Activated T-helper 1 cell treated with anti-CD3 and anti-CD28 coated beads, Interleukin-12 subunit alpha, Interleukin-12 subunit beta, Interleukin-2, Interleukin-4 antibody, amounts not matched to agents 30 ng/mL and 10 ng/mL and 1 ng/mL, durations not matched to agents 14 hours and 24 hours and 36 hours (primary cell): ENCODE measurements at regions of chr11 and their contacts with region 1.

Region 1: GRCh38 chr11:74398244-74399159 is at the start of gene PGM2L1:
- DNase-seq: peak; percentile 88
- H3K4me3 Mint-ChIP-seq: peak within 1 kb of the TSS; percentile 96
- H3K27ac Mint-ChIP-seq: peak within 1 kb of the TSS; percentile 99
- H3K4me1 Mint-ChIP-seq: peaks cover 36% of the 10 kb centered on the region
- H3K27me3 Mint-ChIP-seq: peaks cover 2% of the 10 kb centered on the region
- total RNA-seq, gene PGM2L1: 4.0 and 4.5 TPM in 2 replicates

Region 2: DNA sequence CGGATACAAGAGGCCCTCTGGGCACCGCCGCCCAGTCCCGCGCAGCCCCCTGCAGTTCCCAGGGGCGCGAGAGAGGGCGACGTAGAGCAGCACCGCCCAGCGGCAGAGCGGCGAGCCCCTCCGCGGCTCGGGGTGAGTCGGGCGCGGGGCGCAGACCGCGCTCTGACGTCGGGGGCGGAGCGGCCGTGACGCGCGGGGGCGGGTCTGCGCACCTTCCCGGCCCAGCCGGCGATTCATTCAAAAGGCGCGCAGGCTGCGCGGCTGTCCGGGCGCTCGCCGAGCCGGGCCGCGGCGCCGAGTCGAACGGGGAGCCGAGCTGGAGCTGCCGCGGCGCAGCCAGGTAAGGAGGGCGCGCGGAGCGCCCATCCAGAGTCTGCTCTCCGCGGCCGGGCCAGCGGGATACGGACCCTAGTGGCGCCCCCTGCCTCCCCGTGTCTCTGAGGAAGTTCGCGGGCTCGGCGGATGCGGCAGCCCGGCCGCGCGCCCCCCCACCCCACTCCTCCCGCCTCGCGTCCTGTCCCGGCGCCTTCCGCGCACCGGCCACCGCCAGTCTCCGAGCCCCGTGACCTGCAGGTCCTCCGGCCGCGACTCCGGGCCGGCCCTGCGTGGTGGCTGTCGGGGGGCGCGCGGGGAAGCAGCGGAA is 1022.2 kb before region 1 on chr11 and contains the start of gene RELT:
- intact Hi-C with region 1: loop called (anchors 5 kb)
- DNase-seq: peak; percentile 94
- H3K4me3 Mint-ChIP-seq: peak within 1 kb of the TSS; percentile 91
- H3K27ac Mint-ChIP-seq: peak within 1 kb of the TSS; percentile 90
- H3K4me1 Mint-ChIP-seq: peaks cover 28% of the 10 kb centered on the region
- H3K27me3 Mint-ChIP-seq: no peaks in the 10 kb centered on the region
- total RNA-seq, gene RELT: 34.6 and 37.6 TPM in 2 replicates

Region 3: DNA sequence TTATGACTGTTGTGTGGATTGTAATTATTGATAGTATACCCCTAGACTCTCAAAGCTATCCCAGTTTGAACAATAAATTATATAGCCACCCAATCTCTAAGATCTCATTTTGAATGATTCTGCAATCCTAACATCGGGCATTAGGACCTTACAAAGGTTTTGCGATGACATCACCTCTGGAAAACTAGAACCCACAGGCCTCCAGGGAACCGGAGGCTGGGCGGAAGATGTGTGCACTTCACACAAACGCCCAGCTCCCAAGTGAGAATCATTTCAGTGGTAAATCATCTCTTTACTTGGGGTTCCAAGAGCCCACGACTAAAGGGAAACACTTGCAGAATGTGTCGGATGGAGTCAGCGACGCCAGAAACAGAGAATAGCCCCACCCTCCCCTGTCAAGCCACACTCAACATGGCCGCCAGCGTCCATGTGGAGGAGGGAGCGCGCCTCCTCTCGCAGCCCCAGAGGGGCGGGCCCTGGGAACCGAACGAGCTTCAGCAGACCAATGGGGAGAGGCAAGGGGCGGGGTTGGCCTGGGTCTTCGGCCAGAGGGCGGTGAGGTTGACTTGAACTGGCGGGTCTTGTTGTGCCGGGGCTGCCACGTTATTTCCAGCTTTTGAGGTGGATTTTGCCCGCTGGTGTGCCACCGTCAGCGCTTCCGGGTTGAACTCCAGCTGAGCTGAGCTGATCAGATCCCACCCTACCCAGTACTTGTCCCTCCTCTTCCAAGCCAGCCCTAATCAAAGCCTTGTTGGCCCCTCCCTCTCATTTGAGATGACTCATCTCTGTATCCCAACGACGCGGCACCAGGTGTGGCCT is 619.2 kb before region 1 on chr11:
- intact Hi-C with region 1: loop called (anchors 5 kb)
- DNase-seq: peak; percentile 97
- H3K4me3 Mint-ChIP-seq: peak overlapping the region; percentile 90
- H3K27ac Mint-ChIP-seq: peak overlapping the region; percentile 99
- H3K4me1 Mint-ChIP-seq: peaks cover 10% of the 10 kb centered on the region
- H3K27me3 Mint-ChIP-seq: no peaks in the 10 kb centered on the region

Region 4: DNA sequence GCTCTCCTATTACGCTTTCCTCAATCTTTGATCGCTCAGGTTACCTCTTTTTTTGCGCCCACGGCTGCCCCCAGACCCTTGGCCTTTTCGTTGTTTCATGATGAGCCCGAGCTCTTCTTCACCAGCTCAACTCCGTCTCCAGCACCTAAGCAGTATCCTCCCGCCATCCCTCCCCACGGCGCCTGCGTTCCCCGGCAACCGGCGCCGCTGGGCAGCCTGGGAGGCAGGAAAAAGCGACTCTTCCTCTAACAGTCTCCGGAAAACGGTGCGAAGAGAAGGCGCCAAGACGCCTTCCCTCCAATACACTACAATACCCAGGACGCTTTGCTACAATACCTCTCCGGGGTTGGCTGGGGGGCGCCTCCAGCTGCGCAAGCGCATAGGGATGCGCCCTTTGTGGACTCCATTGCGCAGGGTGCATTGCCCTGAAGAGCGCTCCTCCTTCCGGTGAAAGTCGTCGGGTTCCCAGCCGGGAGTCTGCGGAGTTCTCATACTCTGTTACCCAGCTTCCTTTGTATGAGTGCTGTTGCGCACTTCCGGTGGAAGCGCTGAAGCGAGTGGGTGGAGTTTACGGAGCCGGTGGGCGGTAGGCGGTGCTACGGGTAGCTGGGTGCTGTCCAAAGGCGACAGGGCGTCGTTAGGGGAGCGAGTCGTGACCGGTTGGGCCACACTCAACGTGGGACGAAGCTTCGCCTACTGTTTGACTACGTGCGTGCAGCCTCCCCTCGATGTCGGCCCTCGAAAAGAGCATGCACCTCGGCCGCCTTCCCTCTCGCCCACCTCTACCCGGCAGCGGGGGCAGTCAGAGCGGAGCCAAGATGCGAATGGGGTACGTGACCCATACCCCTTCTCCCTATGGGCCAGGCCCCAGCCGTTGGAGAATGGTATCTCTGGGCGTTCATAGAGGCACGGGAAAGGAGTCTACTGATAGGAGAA is 227.5 kb before region 1 on chr11 and contains the starts of genes C2CD3 and PPME1:
- intact Hi-C with region 1: loop called (anchors 1 kb)
- DNase-seq: peak; percentile 99
- H3K4me3 Mint-ChIP-seq: no peak within 1 kb of the TSS
- H3K27ac Mint-ChIP-seq: no peak within 1 kb of the TSS
- H3K4me1 Mint-ChIP-seq: peaks cover 11% of the 10 kb centered on the region
- H3K27me3 Mint-ChIP-seq: no peaks in the 10 kb centered on the region
- total RNA-seq, gene C2CD3: 46.5 and 49.5 TPM in 2 replicates
- total RNA-seq, gene PPME1: 64.8 and 68.1 TPM in 2 replicates

Region 5: DNA sequence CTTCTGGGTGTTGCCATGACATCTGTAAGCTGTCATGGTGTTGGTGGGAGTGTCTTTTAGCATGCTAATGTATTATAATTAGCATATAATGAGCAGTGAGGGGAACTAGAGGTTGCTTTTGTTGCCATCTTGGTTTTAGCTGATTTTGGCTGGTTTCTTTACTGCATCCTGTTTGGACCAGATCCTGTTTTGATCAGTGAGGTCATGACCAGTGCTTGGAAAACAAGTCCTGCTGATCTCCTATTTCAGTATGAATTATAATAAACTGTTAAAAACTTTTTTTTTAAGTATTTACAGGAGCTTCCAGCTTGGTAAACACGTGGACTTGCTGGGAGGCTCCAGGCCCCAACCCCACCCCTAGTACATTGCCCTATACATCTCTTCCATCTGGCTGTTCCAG is 56.6 kb before region 1 on chr11:
- intact Hi-C with region 1: no loop called
- DNase-seq: no peak
- H3K4me3 Mint-ChIP-seq: no peak overlapping the region
- H3K27ac Mint-ChIP-seq: no peak overlapping the region
- H3K4me1 Mint-ChIP-seq: no peaks in the 10 kb centered on the region
- H3K27me3 Mint-ChIP-seq: no peaks in the 10 kb centered on the region

Region 6: GRCh38 chr11:74449369-74449931 is 50.9 kb after region 1 on chr11:
- intact Hi-C with region 1: loop called (anchors 2 kb)
- DNase-seq: peak; percentile 12
- H3K4me3 Mint-ChIP-seq: no peak overlapping the region
- H3K27ac Mint-ChIP-seq: no peak overlapping the region
- H3K4me1 Mint-ChIP-seq: peaks cover 7% of the 10 kb centered on the region
- H3K27me3 Mint-ChIP-seq: peaks cover 12% of the 10 kb centered on the region

Region 7: DNA sequence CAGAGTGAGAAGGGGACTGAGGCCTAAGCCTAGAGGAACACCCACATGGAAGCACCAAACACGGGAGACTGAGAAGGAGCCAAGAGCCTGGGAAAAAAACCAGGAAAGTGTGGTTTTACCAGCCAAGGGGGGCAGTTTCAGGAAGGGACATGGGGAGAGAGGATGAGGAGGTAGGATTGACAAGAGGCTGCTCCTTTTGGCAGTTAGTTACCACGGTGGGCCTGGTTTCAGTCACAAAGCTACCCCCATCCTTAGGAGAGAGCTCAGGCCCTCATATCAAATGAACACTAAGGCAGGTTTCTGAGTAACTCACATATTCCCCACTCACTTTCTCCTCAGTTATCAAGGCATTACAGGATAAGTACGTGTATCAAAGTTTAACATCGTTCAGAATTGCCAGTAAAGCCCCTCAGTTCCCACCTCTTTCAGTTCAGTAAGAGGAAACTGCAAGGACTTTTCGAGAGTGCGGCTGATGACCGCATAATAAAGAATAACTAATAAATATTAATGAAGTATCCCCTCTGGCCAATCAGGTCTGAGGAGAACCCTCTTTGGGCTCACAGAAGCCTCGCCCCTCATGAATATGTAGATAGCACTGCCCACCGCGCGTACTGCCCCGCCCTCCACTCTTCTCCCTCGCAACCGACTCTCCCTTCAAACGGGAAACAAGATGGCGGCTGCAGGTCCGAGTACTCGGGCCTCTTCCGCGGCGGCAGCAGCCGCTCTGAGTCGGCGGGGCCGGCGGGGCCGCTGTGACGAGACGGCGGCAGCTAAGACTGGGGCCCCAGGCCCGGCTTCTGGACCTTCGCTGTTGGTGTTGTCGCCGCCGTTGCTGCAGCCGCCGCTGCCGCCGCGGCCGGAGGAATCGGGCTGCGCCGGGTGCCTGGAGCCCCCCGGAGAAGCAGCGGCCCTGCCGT is 350.0 kb after region 1 on chr11 and contains the start of gene RNF169:
- intact Hi-C with region 1: loop called (anchors 1 kb)
- DNase-seq: peak; percentile 85
- H3K4me3 Mint-ChIP-seq: peak within 1 kb of the TSS; percentile 98
- H3K27ac Mint-ChIP-seq: peak within 1 kb of the TSS; percentile 90
- H3K4me1 Mint-ChIP-seq: peaks cover 30% of the 10 kb centered on the region
- H3K27me3 Mint-ChIP-seq: peaks cover 4% of the 10 kb centered on the region
- total RNA-seq, gene RNF169: 14.8 and 15.3 TPM in 2 replicates